ENCODE measurements at regions of chr16 and their contacts with region 1.

Region 1: GRCh38 chr16:55711959-55712876 is 56.4 kb downstream of the SLC6A2 start:
- DNase-seq: no peak
- ATAC-seq: peak; percentile 80

Region 2: DNA sequence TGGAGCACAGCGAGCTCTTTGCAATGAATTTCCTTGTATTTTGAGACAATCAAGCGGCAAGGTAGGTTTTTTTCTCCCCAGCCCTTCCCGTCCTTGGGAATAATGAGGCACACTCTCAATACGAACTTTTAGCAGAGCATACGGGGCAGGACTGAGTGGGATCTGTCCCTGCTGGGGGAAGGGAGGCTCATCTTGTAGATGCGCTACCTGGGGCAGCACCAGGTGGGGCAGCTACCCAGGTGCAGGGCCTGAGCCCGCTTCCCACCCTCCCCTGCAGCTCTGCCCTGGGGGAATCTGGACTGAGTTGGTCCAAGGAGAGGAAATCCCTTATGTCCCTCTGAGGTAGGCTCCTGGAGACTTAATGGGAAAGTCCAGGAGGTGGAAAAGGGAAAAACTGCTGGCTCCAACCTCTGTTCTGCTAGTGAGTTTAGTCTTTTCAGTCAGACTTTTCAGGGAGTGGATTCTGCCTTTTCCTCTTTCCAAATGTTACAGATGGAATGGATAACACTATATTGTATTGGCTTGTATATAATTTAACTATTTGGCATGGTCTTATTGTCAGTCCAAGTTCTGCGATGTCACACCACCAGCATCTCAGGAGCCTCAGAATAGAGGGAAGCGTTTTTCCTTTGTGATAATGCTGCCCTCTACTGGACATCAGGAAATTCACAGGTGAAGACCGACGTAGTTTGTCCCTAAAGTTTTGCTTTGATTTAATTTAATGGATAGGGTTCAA is 130.3 kb after region 1 on chr16:
- intact Hi-C with region 1: loop called (anchors 1 kb)
- DNase-seq: no peak
- ATAC-seq: no peak